ENCODE measurements at regions of chr18 and their contacts with region 1.

Region 1: DNA sequence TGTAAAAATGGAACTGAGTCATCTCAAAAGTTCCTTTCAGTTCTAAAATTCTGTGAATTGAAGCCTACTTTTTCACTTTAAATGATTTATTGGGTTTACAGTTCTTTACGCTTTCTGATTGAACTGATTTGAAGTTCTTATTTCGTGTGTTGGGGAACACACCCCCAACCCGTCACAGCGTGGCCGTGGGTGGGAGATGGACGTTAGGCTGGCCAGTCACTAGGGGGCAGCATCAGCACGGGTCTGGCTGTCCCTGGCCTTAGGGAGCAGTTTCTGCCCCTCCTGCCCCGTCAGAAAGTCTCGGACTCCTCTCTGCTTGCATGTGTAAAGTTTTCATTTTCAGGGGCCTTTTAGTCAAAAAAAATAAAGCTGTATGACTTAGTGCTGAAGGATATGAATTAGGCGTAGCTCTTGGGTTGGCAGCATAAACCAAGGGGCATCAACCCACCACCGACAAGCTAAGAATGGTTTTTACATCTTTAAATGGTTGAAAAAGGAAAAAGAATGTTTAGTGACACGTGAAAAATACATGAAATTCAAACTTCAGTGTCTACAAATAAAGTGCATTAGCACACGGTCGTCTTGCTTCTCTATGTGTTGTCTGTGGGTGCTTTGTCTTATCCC is 63.4 kb downstream of the ZCCHC2 start:
- DNase-seq: peak; percentile 69

Region 2: DNA sequence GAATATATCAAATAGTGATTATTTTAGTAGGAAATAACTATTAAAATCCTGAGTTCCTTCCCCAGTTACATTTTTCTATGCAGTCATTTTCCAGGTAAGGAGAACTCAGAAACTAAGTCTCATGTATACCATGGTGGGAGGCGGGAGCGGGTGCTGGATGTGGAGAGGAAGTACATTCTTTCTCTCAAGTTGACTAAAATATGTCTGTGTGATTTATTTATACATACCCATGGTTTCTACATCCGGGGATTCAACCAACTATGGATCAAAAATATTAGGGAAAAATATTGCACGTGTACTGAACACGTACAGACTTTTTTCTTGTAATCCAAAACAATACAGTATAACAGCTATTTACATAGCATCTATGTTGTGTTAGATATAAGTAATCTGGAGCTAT is 56.7 kb before region 1 on chr18:
- CTCF ChIA-PET with region 1: no interaction called
- POLR2A ChIA-PET with region 1: no interaction called
- DNase-seq: no peak

Region 3: GRCh38 chr18:62621546-62621945 is 35.3 kb after region 1 on chr18:
- CTCF ChIA-PET with region 1: no interaction called
- POLR2A ChIA-PET with region 1: no interaction called
- DNase-seq: no peak

Region 4: DNA sequence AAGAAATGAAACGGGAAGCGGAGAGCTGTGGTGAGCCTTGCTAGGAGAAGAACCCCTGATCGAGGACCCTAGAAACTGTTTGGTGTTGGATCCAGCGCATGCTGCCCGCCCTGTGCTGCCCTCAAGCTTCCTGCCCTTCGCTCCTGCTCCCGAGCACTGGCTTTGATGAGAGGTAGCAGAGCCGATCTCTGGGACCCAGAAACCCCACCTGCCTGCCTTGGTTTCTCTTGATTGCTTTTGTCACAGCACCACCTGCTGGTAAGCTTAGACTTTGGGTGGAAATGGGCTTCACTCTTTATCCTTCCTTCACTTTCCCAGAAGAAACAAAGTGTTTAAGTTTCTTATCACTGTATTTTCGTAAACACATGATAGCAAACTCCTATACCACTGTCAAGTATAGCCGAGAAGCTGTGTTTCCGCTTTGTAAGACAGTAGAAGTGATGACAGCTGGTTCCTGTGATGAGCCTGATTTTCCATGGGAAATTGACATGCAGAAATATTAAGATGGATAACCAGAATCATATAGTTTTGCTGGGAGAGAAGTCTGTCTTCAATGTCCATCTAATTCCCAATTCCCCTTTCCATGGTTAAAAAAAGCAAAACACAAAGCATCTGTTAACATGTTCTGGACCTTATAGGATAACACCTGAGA is 396.5 kb after region 1 on chr18:
- CTCF ChIA-PET with region 1: interaction called, 14 read pairs
- POLR2A ChIA-PET with region 1: no interaction called
- DNase-seq: peak; percentile 44

Measured in HEK293T (cell line).